ENCODE measurements at regions of chr2 and their contacts with region 1.

Region 1: GRCh38 chr2:57516698-57517340 is 529.8 kb upstream of the VRK2 start:
- DNase-seq: peak; percentile 41
- ATAC-seq: peak; percentile 47
- H3K4me3 ChIP-seq: no peak overlapping the region
- H3K4me3 Mint-ChIP-seq: no peak overlapping the region
- H3K27ac ChIP-seq: no peak overlapping the region
- H3K27ac Mint-ChIP-seq: no peak overlapping the region
- H3K4me1 ChIP-seq: no peaks in the 10 kb centered on the region
- H3K4me1 Mint-ChIP-seq: no peaks in the 10 kb centered on the region
- H3K27me3 ChIP-seq: no peaks in the 10 kb centered on the region
- H3K27me3 Mint-ChIP-seq: no peaks in the 10 kb centered on the region
- CTCF ChIP-seq: peak; percentile 81

Region 2: DNA sequence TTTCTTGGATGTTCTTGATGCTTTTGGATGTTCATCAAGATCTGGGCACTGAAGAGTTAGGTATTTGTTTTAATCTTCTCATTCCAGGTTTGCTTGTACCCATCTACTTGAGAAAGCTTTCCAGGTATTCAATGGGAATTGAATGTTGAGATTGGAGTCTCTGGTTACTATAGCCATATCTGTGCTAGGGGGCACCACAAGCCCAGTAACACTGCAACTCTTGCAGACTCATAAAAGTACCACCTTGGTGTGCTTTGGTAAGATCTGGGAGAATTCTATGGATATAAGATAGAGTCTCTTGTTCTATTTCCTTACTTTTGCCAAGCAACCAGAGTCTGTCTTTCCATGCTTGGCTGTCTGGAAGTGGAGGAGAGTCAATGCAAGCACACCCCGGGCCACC is 10.9 kb after region 1 on chr2:
- CTCF ChIA-PET with region 1: interaction called, 11 read pairs
- POLR2A ChIA-PET with region 1: no interaction called
- intact Hi-C with region 1: no loop called
- DNase-seq: no peak
- ATAC-seq: no peak
- H3K4me3 ChIP-seq: no peak overlapping the region
- H3K4me3 Mint-ChIP-seq: no peak overlapping the region
- H3K27ac ChIP-seq: no peak overlapping the region
- H3K27ac Mint-ChIP-seq: no peak overlapping the region
- H3K4me1 ChIP-seq: no peaks in the 10 kb centered on the region
- H3K4me1 Mint-ChIP-seq: no peaks in the 10 kb centered on the region
- H3K27me3 ChIP-seq: no peaks in the 10 kb centered on the region
- H3K27me3 Mint-ChIP-seq: no peaks in the 10 kb centered on the region
- CTCF ChIP-seq: no peak

Region 3: DNA sequence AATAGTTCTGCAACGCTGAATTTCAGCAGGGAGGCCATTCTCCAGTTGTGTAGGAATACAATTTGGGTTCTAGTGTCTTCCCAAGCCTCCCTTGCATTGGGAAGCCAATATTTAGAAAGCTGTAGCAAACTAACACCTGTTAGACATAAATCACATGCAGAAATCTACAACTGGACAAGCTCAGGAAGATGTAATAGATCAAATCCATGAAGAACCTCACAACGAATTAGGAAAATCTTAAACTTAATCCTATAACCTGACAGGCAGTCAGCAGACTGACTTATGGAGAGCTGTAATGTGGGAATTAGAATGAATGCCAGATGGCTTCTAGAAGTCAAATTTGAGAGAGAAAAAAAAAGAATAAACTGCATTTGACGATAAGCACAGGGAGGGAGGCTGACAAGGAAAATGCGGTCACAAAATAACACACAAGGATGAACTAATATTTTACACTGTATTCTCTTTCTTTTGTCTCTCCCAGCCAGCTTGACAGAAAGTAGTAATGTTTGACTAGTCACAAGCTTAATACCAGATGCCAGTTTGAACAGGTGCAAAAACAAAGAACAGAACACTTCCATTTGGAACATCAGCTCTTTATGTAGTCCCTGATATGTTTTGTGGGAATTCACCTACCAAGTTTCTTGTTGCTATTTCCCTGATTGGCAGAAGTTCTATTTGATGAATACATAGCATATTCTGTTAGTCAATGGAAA is 775.1 kb after region 1 on chr2:
- CTCF ChIA-PET with region 1: no interaction called
- POLR2A ChIA-PET with region 1: no interaction called
- intact Hi-C with region 1: no loop called
- DNase-seq: no peak
- ATAC-seq: no peak
- H3K4me3 ChIP-seq: no peak overlapping the region
- H3K4me3 Mint-ChIP-seq: no peak overlapping the region
- H3K27ac ChIP-seq: no peak overlapping the region
- H3K27ac Mint-ChIP-seq: no peak overlapping the region
- H3K4me1 ChIP-seq: no peaks in the 10 kb centered on the region
- H3K4me1 Mint-ChIP-seq: no peaks in the 10 kb centered on the region
- H3K27me3 ChIP-seq: peaks cover 0 to 4% (median 0%) of the 10 kb centered on the region in 4 experiments
- H3K27me3 Mint-ChIP-seq: peaks cover 3% of the 10 kb centered on the region
- CTCF ChIP-seq: no peak

Measured in B cell (primary cell).